Calu3 (cell line): ENCODE measurements at regions of chr5 and their contacts with region 1.

Region 1: GRCh38 chr5:111703662-111704061 is 53.3 kb downstream of the NREP start:
- DNase-seq: no peak
- H3K4me3 Mint-ChIP-seq: no peak overlapping the region
- H3K27ac Mint-ChIP-seq: no peak overlapping the region
- H3K4me1 Mint-ChIP-seq: peaks cover 34% of the 10 kb centered on the region
- H3K27me3 Mint-ChIP-seq: no peaks in the 10 kb centered on the region
- CTCF ChIP-seq: no peak

Region 2: DNA sequence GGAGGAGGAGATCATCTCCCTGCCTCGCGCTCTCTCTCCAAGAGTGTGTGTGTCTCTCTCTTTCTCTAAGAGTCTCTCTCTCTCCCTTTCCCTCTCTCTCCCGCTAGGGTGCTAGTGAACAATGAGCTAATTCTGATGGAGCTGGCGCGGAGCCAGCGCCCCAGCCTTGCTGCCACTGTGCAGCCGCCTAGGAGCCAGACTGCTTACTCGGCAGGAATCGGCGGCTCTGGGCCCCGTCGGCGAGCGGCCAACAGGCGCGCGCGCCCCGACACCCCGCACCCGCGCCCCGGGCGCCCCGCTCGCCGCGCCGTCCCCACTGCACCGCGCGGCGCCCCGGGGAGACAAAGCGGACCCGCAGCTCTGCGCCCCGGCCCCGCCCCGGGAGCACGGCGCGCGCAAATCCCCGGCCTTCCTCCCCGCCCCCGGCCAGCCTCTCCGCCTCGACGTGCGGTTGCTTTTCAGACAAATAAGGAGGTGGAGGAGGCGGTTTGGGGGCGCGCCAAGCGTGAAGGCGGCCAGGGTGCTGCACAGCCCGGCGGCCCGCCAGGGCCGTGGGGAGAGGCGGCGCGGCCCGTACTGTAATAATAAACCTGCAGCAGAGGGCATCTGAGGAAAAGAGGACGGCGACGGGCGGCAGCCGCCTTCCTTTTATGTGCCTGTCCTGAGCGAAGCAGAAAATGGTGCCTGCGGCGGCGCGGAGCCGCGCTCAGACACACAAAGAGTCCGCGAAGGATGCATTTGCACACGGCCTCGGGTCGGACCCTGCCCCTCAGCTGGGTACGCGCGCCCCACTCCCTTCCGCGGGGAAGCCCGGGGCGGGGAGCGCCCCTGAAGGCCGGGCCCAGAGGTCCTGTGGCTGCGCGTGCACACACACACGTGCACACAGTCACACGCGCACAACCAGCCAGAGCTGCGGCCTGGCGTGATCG is 54.0 kb after region 1 on chr5:
- CTCF ChIA-PET with region 1: interaction called, 7 read pairs
- intact Hi-C with region 1: loop called (anchors 5 kb)
- DNase-seq: peak; percentile 93
- H3K4me3 Mint-ChIP-seq: peak overlapping the region; percentile 60
- H3K27ac Mint-ChIP-seq: peak overlapping the region; percentile 72
- H3K4me1 Mint-ChIP-seq: peaks cover 8% of the 10 kb centered on the region
- H3K27me3 Mint-ChIP-seq: no peaks in the 10 kb centered on the region
- CTCF ChIP-seq: peak; percentile 38

Region 3: GRCh38 chr5:111781200-111781599 is 77.5 kb after region 1 on chr5:
- CTCF ChIA-PET with region 1: no interaction called
- intact Hi-C with region 1: no loop called
- DNase-seq: no peak
- H3K4me3 Mint-ChIP-seq: no peak overlapping the region
- H3K27ac Mint-ChIP-seq: no peak overlapping the region
- H3K4me1 Mint-ChIP-seq: peaks cover 17% of the 10 kb centered on the region
- H3K27me3 Mint-ChIP-seq: no peaks in the 10 kb centered on the region
- CTCF ChIP-seq: no peak